ENCODE measurements at regions of chr17 and their contacts with region 1.

Region 1: DNA sequence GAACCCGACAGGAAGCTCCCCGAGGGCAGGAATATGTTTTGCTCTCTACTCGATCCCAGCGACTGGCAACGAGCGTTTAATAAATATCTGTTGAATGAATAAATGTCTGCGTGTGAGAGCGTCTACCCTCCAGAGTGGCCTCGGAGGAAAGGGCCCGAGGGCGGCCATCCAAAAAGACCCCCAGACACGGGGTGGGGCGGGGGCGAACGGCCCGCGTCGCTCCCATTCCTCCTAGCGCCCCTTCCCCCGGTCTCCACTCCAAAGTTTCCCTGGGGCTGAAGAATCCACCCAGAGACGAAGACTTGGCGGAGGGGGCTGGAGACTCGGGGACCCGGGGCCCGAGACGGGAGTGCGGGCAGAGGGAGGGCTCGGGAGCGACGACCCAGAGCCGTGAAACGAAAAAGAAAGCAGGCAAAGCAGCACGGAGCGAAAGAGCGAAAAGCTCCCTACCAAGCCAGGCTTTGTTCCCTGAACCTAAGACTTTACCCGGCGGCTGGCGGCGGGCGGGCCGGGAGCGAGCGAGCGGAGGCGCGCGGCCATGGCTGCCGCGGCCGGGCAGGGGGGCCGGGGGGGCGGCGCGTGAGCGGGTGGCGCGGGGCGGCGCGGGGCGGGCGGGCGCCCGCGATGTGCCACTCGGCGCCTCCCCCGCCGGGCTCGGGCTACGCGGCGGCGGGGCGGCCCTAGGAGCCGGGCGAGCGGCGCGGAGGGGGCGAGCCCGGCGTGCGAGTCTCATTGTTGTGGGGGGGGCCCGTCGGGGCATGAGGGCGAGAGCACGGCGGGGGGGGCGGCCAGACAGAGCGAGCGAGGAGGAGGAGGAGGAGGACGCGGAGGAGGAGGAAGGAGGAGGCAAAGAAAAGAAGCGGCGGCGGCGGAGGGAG is at the start of gene MLLT6:
- DNase-seq: peak; percentile 79
- ATAC-seq: peak; percentile 19
- H3K4me3 Mint-ChIP-seq: peak within 1 kb of the TSS; percentile 88
- H3K27ac Mint-ChIP-seq: peak within 1 kb of the TSS; percentile 83
- H3K4me1 Mint-ChIP-seq: peaks cover 53% of the 10 kb centered on the region
- H3K27me3 Mint-ChIP-seq: peaks cover 89% of the 10 kb centered on the region
- CTCF ChIP-seq: no peak
- total RNA-seq, gene MLLT6: 34.4 to 48.0 TPM (median 36.6 TPM) in 3 replicates

Region 2: GRCh38 chr17:38687286-38687685 is 17.6 kb before region 1 on chr17:
- CTCF ChIA-PET with region 1: interaction called, 10 read pairs
- POLR2A ChIA-PET with region 1: no interaction called
- DNase-seq: no peak
- ATAC-seq: no peak
- H3K4me3 Mint-ChIP-seq: no peak overlapping the region
- H3K27ac Mint-ChIP-seq: no peak overlapping the region
- H3K4me1 Mint-ChIP-seq: peaks cover 8% of the 10 kb centered on the region
- H3K27me3 Mint-ChIP-seq: peaks cover 17% of the 10 kb centered on the region
- CTCF ChIP-seq: no peak

Region 3: GRCh38 chr17:38719943-38720641 is 15.2 kb after region 1 on chr17:
- CTCF ChIA-PET with region 1: interaction called, 13 read pairs
- POLR2A ChIA-PET with region 1: interaction called, 15 read pairs
- DNase-seq: peak; percentile 85
- ATAC-seq: peak; percentile 69
- H3K4me3 Mint-ChIP-seq: peak overlapping the region; percentile 54
- H3K27ac Mint-ChIP-seq: no peak overlapping the region
- H3K4me1 Mint-ChIP-seq: peaks cover 39% of the 10 kb centered on the region
- H3K27me3 Mint-ChIP-seq: peaks cover 12% of the 10 kb centered on the region
- CTCF ChIP-seq: no peak

Measured in WTC11 (cell line).